H1 (cell line): ENCODE measurements at regions of chr4 and their contacts with region 1.

Region 1: DNA sequence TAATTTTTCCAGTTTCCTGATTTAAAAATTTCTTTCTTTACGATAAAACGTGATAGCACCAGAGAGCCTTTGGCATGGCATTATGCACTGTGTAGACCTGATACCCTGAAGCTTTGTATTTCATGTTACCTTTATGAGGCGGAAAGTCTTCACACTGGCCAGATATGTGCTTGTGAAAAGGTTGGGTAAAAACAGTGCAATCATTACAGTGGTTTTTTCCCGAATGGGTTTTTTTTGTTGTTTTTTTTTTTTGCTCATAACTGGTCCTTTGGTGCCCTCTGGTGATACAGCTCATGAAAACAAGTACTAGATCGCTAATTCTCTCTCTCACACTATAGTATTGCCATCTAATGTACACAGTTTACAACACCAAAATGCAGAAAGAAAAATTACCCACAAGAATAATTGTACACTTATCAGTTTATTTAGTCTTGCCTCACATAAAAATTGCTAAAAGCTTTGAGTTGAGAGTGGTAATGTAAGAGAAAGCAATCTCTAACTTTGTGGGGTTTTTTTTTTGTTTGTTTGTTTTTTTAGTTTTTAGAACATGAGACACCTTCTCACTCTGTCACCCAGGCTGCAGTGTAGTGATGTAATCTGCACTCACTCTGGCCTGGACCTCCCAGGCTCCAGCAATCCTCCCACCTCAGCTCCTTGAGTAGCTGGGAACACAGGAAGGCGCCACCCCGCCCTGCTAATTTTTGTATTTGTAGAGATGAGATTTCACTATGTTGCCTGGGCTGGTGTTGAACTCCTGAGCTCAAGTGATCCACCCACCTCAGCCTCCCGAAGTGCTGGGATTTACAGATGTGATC is 21.3 kb downstream of the SPCS3 start:
- DNase-seq: no peak
- H3K4me3 ChIP-seq: no peak overlapping the region
- H3K27ac ChIP-seq: no peak overlapping the region
- H3K4me1 ChIP-seq: peaks cover 0 to 3% (median under 1%) of the 10 kb centered on the region in 4 experiments; a peak in 2 of 7 replicates
- H3K27me3 ChIP-seq: peaks cover 0 to 1% (median 0%) of the 10 kb centered on the region in 4 experiments; a peak in 1 of 7 replicates
- CTCF ChIP-seq: peak in 2 of 3 experiments; percentile 49 to 52; a peak in 2 of 4 replicates
- EP300 ChIP-seq: no peak
- POLR2A ChIP-seq: no peak
- RAD21 ChIP-seq: peak; percentile 87 to 90

Region 2: DNA sequence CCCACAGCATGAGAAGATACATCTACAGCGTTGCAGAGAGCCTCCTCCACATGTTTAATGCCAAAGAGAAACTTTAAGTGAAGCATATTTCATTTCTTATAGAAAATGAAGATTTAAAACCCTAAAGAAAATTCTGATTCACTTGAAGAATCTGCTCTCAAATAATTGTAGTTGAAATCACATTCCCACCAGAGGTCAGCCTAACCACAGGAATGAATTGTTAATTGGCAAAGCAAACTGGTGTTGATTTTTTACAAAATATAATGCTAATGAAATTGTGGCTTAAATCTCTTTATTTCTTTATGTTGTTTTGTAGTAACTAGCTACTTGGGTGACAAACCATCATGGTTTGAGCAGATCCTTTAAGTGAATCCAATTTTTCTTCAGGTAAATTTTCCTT is 306.6 kb before region 1 on chr4:
- CTCF ChIA-PET with region 1: interaction called, 52 read pairs
- POLR2A ChIA-PET with region 1: no interaction called
- DNase-seq: no peak
- H3K4me3 ChIP-seq: no peak overlapping the region
- H3K27ac ChIP-seq: no peak overlapping the region
- H3K4me1 ChIP-seq: no peaks in the 10 kb centered on the region
- H3K27me3 ChIP-seq: no peaks in the 10 kb centered on the region
- CTCF ChIP-seq: peak in 2 of 3 experiments; percentile 30 to 32; a peak in 2 of 4 replicates
- EP300 ChIP-seq: no peak
- POLR2A ChIP-seq: no peak
- RAD21 ChIP-seq: peak; percentile 74 to 80

Region 3: GRCh38 chr4:176150356-176150682 is 190.8 kb before region 1 on chr4:
- CTCF ChIA-PET with region 1: interaction called, 31 read pairs
- POLR2A ChIA-PET with region 1: no interaction called
- DNase-seq: no peak
- H3K4me3 ChIP-seq: no peak overlapping the region
- H3K27ac ChIP-seq: no peak overlapping the region
- H3K4me1 ChIP-seq: no peaks in the 10 kb centered on the region
- H3K27me3 ChIP-seq: no peaks in the 10 kb centered on the region
- CTCF ChIP-seq: peak in 1 of 3 experiments; percentile 7; a peak in 1 of 4 replicates
- EP300 ChIP-seq: no peak
- POLR2A ChIP-seq: no peak
- RAD21 ChIP-seq: peak; percentile 49 to 52

Region 4: GRCh38 chr4:176319704-176320339 is 21.3 kb before region 1 on chr4 and contains the start of gene SPCS3:
- CTCF ChIA-PET with region 1: interaction called, 11 read pairs
- POLR2A ChIA-PET with region 1: no interaction called
- DNase-seq: peak; percentile 79 to 93
- H3K4me3 ChIP-seq: peak within 1 kb of the TSS; percentile 75 to 99 (median 92)
- H3K27ac ChIP-seq: peak within 1 kb of the TSS; percentile 79
- H3K4me1 ChIP-seq: no peaks in the 10 kb centered on the region; a peak in 1 of 7 replicates
- H3K27me3 ChIP-seq: no peaks in the 10 kb centered on the region
- CTCF ChIP-seq: no peak
- EP300 ChIP-seq: no peak
- POLR2A ChIP-seq: peak; percentile 74 to 89
- RAD21 ChIP-seq: no peak
- total RNA-seq, gene SPCS3: 107 and 117 TPM in 2 replicates